Tibial artery (tissue), 4 donors: ENCODE measurements at regions of chr9 and their contacts with region 1.

Region 1: GRCh38 chr9:76552751-76553455 is 93.9 kb downstream of the GCNT1 start:
- DNase-seq: no peak
- H3K4me3 ChIP-seq: no peak overlapping the region
- H3K27ac ChIP-seq: no peak overlapping the region
- H3K4me1 ChIP-seq: no peaks in the 10 kb centered on the region
- H3K27me3 ChIP-seq: no peaks in the 10 kb centered on the region
- CTCF ChIP-seq: no peak

Region 2: GRCh38 chr9:74630228-74630627 is 1922.7 kb before region 1 on chr9:
- intact Hi-C with region 1: no loop called
- DNase-seq: no peak
- H3K4me3 ChIP-seq: no peak overlapping the region
- H3K27ac ChIP-seq: no peak overlapping the region
- H3K4me1 ChIP-seq: no peaks in the 10 kb centered on the region
- H3K27me3 ChIP-seq: no peaks in the 10 kb centered on the region
- CTCF ChIP-seq: no peak

Region 3: DNA sequence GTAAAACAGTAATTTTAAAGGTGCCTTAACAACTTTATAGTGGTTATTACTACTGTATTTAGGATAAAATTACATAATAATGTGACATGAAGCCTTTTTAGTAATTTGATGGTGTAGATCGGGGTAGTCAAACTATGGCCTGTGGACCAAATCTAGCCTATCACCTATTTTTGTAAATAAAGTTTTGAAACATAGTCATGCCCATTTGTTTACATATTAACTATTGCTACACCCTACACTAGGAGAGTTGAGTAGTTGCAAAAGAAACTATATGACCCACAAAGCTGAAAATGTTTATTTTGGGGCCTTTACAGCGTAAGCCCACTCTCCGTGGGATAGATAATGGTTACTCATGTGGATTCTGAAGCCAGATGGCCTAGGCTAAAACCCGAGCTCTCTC is 1689.1 kb after region 1 on chr9:
- intact Hi-C with region 1: loop called (anchors 5 kb)
- DNase-seq: no peak
- H3K4me3 ChIP-seq: no peak overlapping the region
- H3K27ac ChIP-seq: no peak overlapping the region
- H3K4me1 ChIP-seq: peaks cover 0 to 7% (median 0%) of the 10 kb centered on the region in 4 donors
- H3K27me3 ChIP-seq: no peaks in the 10 kb centered on the region
- CTCF ChIP-seq: no peak